Activated naive CD4-positive, alpha-beta T cell treated with anti-CD3 and anti-CD28 coated beads for 36 hours (primary cell): ENCODE measurements at regions of chr6 and their contacts with region 1.

Region 1: GRCh38 chr6:75284632-75285286 is at the start of gene TMEM30A:
- DNase-seq: peak; percentile 97
- H3K4me3 Mint-ChIP-seq: no peak within 1 kb of the TSS
- H3K27ac Mint-ChIP-seq: no peak within 1 kb of the TSS
- H3K4me1 Mint-ChIP-seq: peaks cover 44% of the 10 kb centered on the region
- H3K27me3 Mint-ChIP-seq: no peaks in the 10 kb centered on the region
- total RNA-seq, gene TMEM30A: 68.9 to 76.0 TPM

Region 2: GRCh38 chr6:73461537-73462350 is 1823.0 kb before region 1 on chr6 and contains the start of gene MTO1:
- CTCF ChIA-PET with region 1: no interaction called
- intact Hi-C with region 1: loop called (anchors 5 kb)
- DNase-seq: peak; percentile 92
- H3K4me3 Mint-ChIP-seq: peak within 1 kb of the TSS; percentile 94
- H3K27ac Mint-ChIP-seq: peak within 1 kb of the TSS; percentile 97
- H3K4me1 Mint-ChIP-seq: peaks cover 37% of the 10 kb centered on the region
- H3K27me3 Mint-ChIP-seq: no peaks in the 10 kb centered on the region
- total RNA-seq, gene MTO1: 38.7 to 47.1 TPM

Region 3: GRCh38 chr6:73585566-73586415 is 1699.0 kb before region 1 on chr6:
- CTCF ChIA-PET with region 1: no interaction called
- intact Hi-C with region 1: loop called (anchors 2 kb)
- DNase-seq: peak; percentile 70
- H3K4me3 Mint-ChIP-seq: peak overlapping the region; percentile 78
- H3K27ac Mint-ChIP-seq: peak overlapping the region; percentile 99
- H3K4me1 Mint-ChIP-seq: peaks cover 36% of the 10 kb centered on the region
- H3K27me3 Mint-ChIP-seq: no peaks in the 10 kb centered on the region

Region 4: DNA sequence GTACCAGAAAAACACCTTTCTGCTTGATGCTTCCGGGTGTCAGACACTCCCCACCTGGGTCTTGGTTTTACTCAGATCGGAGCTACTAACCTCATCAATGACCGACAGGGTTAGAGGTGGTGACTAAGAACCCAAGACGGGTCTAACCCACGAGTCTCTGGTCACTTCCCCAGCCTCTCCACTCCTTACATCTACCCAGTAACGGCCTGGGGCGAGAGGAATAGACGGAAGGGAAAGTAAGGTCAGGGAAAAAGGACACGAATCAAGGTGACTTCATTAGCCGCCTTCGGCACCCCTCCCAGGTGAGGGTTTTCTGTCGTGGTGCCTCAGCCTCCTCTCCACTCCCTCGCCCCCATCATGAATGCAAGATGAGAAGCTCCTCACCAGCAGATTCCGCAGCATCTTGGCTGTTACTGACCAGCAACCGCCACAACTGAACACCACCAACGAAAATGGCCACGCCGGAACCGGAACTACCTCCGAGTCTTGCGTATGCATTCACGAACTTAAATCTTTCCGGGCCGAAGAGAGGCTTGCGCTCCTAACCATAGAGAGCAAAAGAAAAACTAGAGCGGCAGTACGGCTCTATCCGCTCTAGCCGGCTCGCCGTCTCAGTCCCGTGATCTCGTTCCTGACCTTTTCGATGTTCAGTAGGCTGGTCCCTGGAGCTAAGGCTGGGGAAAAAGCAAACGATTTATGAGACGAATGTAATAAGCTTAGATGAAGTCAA is 41.3 kb before region 1 on chr6 and contains the start of gene COX7A2:
- CTCF ChIA-PET with region 1: no interaction called
- intact Hi-C with region 1: loop called (anchors 1 kb)
- DNase-seq: peak; percentile 92
- H3K4me3 Mint-ChIP-seq: peak within 1 kb of the TSS; percentile 98
- H3K27ac Mint-ChIP-seq: peak within 1 kb of the TSS; percentile 100
- H3K4me1 Mint-ChIP-seq: peaks cover 32% of the 10 kb centered on the region
- H3K27me3 Mint-ChIP-seq: peaks cover 12% of the 10 kb centered on the region
- total RNA-seq, gene COX7A2: 577 to 592 TPM

Region 5: DNA sequence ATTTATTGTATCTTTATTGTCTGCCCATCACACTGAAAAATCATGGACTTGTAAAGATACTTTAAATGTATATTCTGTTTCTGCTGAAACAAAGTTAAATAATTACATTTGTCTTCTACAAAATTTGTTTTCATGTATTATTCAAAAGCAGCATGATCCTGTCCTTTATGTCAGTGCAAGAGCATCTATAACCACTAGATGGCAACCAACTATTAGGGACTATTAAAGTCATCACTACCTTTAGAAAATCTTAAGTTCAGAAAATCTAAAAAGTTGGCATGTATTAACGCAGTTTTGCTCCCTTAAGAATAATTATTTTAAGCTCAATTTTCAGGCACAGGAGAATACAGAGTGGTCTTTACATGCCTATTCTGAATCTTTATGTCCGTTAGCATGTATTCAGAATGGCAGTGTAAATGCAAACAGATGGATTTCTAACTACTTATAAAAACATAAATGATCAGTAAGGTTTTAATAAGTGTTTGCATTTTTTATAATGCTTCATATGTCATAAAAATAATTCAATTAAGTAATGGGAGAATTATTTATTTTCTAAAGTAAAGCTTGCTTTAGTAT is 18.0 kb before region 1 on chr6:
- CTCF ChIA-PET with region 1: interaction called, 47 read pairs
- intact Hi-C with region 1: loop called (anchors 1 kb)
- DNase-seq: no peak
- H3K4me3 Mint-ChIP-seq: no peak overlapping the region
- H3K27ac Mint-ChIP-seq: no peak overlapping the region
- H3K4me1 Mint-ChIP-seq: peaks cover 38% of the 10 kb centered on the region
- H3K27me3 Mint-ChIP-seq: no peaks in the 10 kb centered on the region

Region 6: DNA sequence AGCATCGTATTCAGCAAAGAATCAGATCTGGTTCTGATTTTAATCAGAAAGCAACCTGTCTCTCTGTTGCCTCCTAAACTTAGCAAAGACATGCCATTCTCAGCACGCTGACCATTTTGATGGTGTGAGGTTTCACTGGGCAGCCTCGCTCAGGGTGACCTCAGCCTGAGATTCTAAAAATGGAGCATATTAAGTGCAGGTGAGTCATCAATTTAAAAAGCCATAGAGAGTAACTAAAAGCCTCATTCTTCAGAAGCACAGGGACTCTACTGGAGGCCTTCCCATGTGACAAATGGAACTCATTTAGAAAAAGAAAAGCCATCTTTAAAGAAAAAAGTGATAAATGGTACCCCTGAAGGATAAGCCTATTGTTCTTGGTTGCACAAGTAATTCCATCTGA is 117.5 kb after region 1 on chr6:
- CTCF ChIA-PET with region 1: no interaction called
- intact Hi-C with region 1: no loop called
- DNase-seq: no peak
- H3K4me3 Mint-ChIP-seq: no peak overlapping the region
- H3K27ac Mint-ChIP-seq: no peak overlapping the region
- H3K4me1 Mint-ChIP-seq: no peaks in the 10 kb centered on the region
- H3K27me3 Mint-ChIP-seq: peaks cover 3% of the 10 kb centered on the region

Region 7: DNA sequence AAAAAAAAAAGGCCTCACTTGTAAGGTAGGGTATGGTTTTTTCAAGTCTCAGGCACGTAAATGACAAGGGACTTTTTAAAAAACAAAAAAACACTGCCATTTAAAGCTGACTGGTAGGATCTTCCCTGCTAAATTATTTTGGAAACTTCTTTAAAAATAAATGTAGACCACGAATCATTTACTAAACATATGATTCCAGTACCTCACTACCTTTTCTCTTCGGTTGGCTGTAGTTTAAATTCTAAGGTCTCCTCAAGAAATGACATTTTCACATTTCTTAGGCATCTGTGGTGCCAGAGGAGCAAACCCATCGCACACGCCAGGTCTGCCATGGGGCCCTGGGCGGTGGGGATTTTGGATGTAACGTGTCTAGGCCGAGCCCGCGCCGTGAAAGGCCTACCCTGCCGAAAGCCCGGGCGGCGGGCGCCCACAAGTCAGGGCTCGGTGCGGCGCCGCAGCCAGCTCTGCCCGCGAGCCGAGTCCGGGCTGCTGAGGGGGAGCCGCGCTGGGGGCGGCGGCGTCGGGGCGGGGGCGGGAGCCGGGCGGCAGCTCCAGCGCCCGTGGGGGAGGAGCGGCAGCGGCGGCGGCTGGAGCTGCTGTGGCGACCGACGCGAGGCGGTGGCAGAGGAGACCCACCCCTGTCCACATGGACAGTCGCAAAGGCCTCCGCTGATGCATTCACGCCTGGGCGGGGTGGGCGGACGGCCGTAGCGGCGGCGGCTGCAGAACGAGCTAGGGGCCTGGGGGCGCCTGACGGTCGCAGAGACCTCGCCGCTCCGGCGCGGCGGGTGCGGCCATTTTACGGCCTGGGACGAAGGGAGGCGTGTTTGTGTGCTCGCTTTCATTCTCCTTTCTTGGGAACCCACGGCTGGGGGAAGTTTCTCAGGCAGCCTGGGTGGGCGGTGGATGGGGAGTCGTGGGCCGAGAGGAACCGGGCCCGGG is 316.8 kb after region 1 on chr6 and contains the start of gene SENP6:
- CTCF ChIA-PET with region 1: no interaction called
- intact Hi-C with region 1: loop called (anchors 1 kb)
- DNase-seq: peak; percentile 68
- H3K4me3 Mint-ChIP-seq: peak within 1 kb of the TSS; percentile 95
- H3K27ac Mint-ChIP-seq: peak within 1 kb of the TSS; percentile 99
- H3K4me1 Mint-ChIP-seq: peaks cover 55% of the 10 kb centered on the region
- H3K27me3 Mint-ChIP-seq: no peaks in the 10 kb centered on the region
- total RNA-seq, gene SENP6: 54.0 to 57.7 TPM

Region 8: GRCh38 chr6:75748743-75749501 is 464.2 kb after region 1 on chr6 and contains the start of gene MYO6:
- CTCF ChIA-PET with region 1: no interaction called
- intact Hi-C with region 1: loop called (anchors 5 kb)
- DNase-seq: peak; percentile 27
- H3K4me3 Mint-ChIP-seq: peak within 1 kb of the TSS; percentile 85
- H3K27ac Mint-ChIP-seq: no peak within 1 kb of the TSS
- H3K4me1 Mint-ChIP-seq: peaks cover 6% of the 10 kb centered on the region
- H3K27me3 Mint-ChIP-seq: peaks cover 36% of the 10 kb centered on the region
- total RNA-seq, gene MYO6: 1.8 to 2.0 TPM